ENCODE measurements at regions of chr7 and their contacts with region 1.

Region 1: GRCh38 chr7:96287132-96287531 is 34.8 kb downstream of the SLC25A13 start:
- DNase-seq: no peak
- H3K4me3 ChIP-seq: no peak overlapping the region
- H3K27ac ChIP-seq: no peak overlapping the region
- H3K4me1 ChIP-seq: no peaks in the 10 kb centered on the region
- H3K27me3 ChIP-seq: no peaks in the 10 kb centered on the region
- CTCF ChIP-seq: no peak

Region 2: DNA sequence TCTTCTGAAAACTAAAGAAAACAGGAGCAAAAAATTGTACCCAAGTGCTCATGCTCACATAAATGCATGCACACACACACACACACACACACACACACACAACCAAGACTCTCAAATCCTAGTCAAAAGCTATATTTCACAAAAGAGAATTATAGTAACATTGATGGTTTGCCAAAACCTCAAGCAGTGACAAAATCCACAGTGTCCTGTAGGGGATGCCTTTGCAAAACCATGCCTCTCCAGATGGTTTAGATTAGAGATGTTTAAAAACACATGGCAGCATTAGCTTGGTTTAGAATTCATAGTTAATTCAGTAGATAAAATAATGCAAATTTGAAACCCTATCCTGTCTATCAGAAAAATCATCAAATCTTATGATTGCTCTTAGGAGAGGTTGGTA is 282.6 kb before region 1 on chr7:
- CTCF ChIA-PET with region 1: no interaction called
- POLR2A ChIA-PET with region 1: no interaction called
- intact Hi-C with region 1: no loop called
- DNase-seq: peak; percentile 86
- H3K4me3 ChIP-seq: no peak overlapping the region
- H3K27ac ChIP-seq: no peak overlapping the region
- H3K4me1 ChIP-seq: peaks cover 16% of the 10 kb centered on the region
- H3K27me3 ChIP-seq: no peaks in the 10 kb centered on the region
- CTCF ChIP-seq: peak; percentile 52

Region 3: DNA sequence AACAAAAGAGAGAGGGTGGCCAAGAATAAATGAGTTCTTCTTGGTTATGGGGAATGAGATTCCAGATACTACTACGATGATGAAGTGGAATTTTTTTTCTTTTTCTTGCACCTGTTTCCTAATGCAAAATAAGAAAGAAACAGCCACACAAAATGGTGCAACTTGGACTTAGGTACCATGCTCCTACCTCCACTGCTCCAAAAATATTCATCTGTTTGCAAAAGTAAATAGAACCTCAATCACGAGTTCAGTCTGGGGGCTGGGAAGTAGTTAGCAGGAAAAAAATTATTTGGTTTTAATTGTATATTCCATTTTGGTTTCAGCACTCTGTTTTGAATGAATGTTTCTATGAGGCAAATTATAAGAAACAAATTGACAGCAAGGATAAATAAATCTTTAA is 38.7 kb before region 1 on chr7:
- CTCF ChIA-PET with region 1: no interaction called
- POLR2A ChIA-PET with region 1: no interaction called
- intact Hi-C with region 1: loop called (anchors 2 kb)
- DNase-seq: no peak
- H3K4me3 ChIP-seq: no peak overlapping the region
- H3K27ac ChIP-seq: no peak overlapping the region
- H3K4me1 ChIP-seq: no peaks in the 10 kb centered on the region
- H3K27me3 ChIP-seq: no peaks in the 10 kb centered on the region
- CTCF ChIP-seq: no peak